T-cell (primary cell): ENCODE measurements at regions of chr15 and their contacts with region 1.

Region 1: DNA sequence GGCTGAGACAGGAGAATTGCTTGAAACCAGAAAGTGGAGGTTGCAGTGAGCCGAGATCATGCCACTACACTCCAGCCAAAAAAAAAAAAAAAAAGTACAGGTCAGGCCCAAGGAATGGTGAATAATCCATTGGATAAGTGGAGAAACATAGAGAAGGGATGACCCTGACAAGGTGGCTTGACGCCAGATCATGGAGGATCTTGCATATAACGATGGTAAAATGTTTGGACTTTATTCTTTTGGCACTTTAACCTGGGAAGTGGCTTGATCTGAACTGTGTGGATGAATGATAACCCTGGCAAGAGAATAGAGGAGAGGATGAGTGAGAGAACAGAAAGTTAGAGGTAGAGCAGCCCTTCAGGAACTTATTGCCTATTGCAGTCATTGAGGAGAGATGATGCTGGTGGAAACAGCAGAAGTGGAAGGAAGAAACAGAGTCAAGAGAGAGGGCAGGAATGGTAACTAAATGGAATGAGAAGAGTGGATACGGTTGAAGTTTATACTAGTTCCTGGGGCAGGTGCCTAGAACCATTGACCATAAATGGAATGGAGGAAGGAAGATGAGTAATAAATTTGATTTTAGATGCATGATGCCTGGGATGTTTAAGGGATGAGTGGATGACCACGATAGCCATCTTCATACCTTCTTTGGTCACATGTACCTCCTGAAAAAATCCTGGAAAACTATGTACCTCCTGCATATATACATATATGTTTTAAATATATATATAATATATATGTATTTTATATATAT is 57.8 kb downstream of the BLM start:
- DNase-seq: no peak
- ATAC-seq: no peak
- H3K4me3 ChIP-seq: no peak overlapping the region
- H3K4me3 Mint-ChIP-seq: no peak overlapping the region
- H3K27ac ChIP-seq: no peak overlapping the region
- H3K27ac Mint-ChIP-seq: no peak overlapping the region
- H3K4me1 ChIP-seq: no peaks in the 10 kb centered on the region
- H3K4me1 Mint-ChIP-seq: peaks cover 0 to 4% (median 2%) of the 10 kb centered on the region in 3 donors
- H3K27me3 ChIP-seq: no peaks in the 10 kb centered on the region
- H3K27me3 Mint-ChIP-seq: no peaks in the 10 kb centered on the region

Region 2: GRCh38 chr15:90750186-90750585 is 24.7 kb before region 1 on chr15:
- CTCF ChIA-PET with region 1: no interaction called
- POLR2A ChIA-PET with region 1: no interaction called
- DNase-seq: peak in 2 of 35 experiments; percentile 2 to 26
- ATAC-seq: no peak
- H3K4me3 ChIP-seq: no peak overlapping the region
- H3K4me3 Mint-ChIP-seq: peak overlapping the region in 1 of 3 donors; percentile 44
- H3K27ac ChIP-seq: no peak overlapping the region
- H3K27ac Mint-ChIP-seq: no peak overlapping the region
- H3K4me1 ChIP-seq: no peaks in the 10 kb centered on the region
- H3K4me1 Mint-ChIP-seq: peaks cover 0 to 20% (median 11%) of the 10 kb centered on the region in 3 donors
- H3K27me3 ChIP-seq: no peaks in the 10 kb centered on the region
- H3K27me3 Mint-ChIP-seq: no peaks in the 10 kb centered on the region

Region 3: GRCh38 chr15:90799639-90800170 is 24.8 kb after region 1 on chr15:
- CTCF ChIA-PET with region 1: no interaction called
- POLR2A ChIA-PET with region 1: interaction called in 1 of 2 experiments, 11 read pairs
- DNase-seq: no peak
- ATAC-seq: no peak
- H3K4me3 ChIP-seq: no peak overlapping the region
- H3K4me3 Mint-ChIP-seq: no peak overlapping the region
- H3K27ac ChIP-seq: no peak overlapping the region
- H3K27ac Mint-ChIP-seq: no peak overlapping the region
- H3K4me1 ChIP-seq: no peaks in the 10 kb centered on the region
- H3K4me1 Mint-ChIP-seq: no peaks in the 10 kb centered on the region
- H3K27me3 ChIP-seq: no peaks in the 10 kb centered on the region
- H3K27me3 Mint-ChIP-seq: no peaks in the 10 kb centered on the region